ENCODE measurements at regions of chr18 and their contacts with region 1.

Region 1: GRCh38 chr18:11995445-11996189 is 14.3 kb downstream of the IMPA2 start:
- DNase-seq: peak; percentile 54
- H3K4me3 ChIP-seq: no peak overlapping the region
- H3K27ac ChIP-seq: no peak overlapping the region
- H3K4me1 ChIP-seq: peaks cover 14% of the 10 kb centered on the region
- H3K27me3 ChIP-seq: no peaks in the 10 kb centered on the region
- CTCF ChIP-seq: peak; percentile 66 to 79

Region 2: GRCh38 chr18:11937874-11938478 is 57.6 kb before region 1 on chr18:
- CTCF ChIA-PET with region 1: interaction called, 40 read pairs
- dilution Hi-C with region 1: loop called (anchors 5 kb)
- in situ Hi-C with region 1: loop called in 1 of 2 experiments (anchors 5 kb)
- intact Hi-C with region 1: loop called (anchors 1 kb)
- DNase-seq: peak; percentile 47
- H3K4me3 ChIP-seq: no peak overlapping the region
- H3K27ac ChIP-seq: no peak overlapping the region
- H3K4me1 ChIP-seq: no peaks in the 10 kb centered on the region
- H3K27me3 ChIP-seq: no peaks in the 10 kb centered on the region
- CTCF ChIP-seq: peak; percentile 70 to 83

Region 3: GRCh38 chr18:11947214-11948191 is 48.1 kb before region 1 on chr18:
- CTCF ChIA-PET with region 1: interaction called, 4 read pairs
- dilution Hi-C with region 1: no loop called
- in situ Hi-C with region 1: no loop called
- intact Hi-C with region 1: loop called (anchors 2 kb)
- DNase-seq: peak; percentile 95
- H3K4me3 ChIP-seq: no peak overlapping the region
- H3K27ac ChIP-seq: peak overlapping the region; percentile 57
- H3K4me1 ChIP-seq: peaks cover 17% of the 10 kb centered on the region
- H3K27me3 ChIP-seq: no peaks in the 10 kb centered on the region
- CTCF ChIP-seq: no peak

Region 4: GRCh38 chr18:12038639-12039417 is 43.2 kb after region 1 on chr18:
- CTCF ChIA-PET with region 1: interaction called, 7 read pairs
- dilution Hi-C with region 1: no loop called
- in situ Hi-C with region 1: no loop called
- intact Hi-C with region 1: loop called (anchors 1 kb)
- DNase-seq: peak; percentile 61
- H3K4me3 ChIP-seq: peak overlapping the region; percentile 33 to 53 (median 41)
- H3K27ac ChIP-seq: peak overlapping the region; percentile 22
- H3K4me1 ChIP-seq: peaks cover 20% of the 10 kb centered on the region
- H3K27me3 ChIP-seq: no peaks in the 10 kb centered on the region
- CTCF ChIP-seq: peak; percentile 73 to 93

Region 5: DNA sequence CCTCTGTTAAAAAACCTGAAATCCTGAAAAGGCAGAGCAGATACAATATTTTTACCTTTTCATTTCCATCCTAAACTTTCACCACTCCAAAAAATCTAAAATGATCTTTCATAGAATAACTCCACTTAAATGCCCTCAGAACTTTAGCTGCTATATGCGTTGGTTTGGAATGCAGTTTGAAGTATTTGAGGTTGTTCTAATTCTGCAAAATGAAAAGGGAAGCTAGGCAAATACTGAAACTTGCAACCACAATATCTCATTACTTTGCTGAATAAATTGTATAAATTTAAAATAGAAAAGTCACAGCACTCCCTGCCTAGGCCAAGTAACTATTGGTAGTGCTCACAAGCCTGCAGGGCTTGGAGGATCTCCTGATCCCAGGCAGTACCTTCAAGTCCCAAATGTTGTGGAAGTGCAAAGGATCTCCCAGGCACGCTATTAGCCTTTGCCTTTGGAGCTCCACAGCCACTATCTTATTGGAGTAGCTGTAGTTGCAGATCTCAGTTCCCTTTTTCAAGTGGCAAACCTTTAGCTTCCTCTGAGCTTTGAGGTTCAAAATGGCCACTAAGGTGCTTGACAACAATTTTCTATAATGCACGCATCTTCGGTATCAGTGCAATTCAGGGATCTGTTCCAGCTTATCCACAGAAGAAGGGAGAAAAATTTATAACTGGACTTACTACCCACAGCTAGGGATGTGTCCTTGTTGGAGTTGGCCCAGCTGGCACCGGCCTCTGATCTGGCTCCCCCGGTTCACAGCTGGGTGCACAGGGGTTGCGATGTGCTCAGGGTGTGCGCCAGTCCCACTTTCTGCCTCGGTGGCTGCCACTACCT is 54.6 kb after region 1 on chr18:
- CTCF ChIA-PET with region 1: no interaction called
- dilution Hi-C with region 1: no loop called
- in situ Hi-C with region 1: loop called in 1 of 2 experiments (anchors 10 kb)
- intact Hi-C with region 1: no loop called
- DNase-seq: no peak
- H3K4me3 ChIP-seq: no peak overlapping the region
- H3K27ac ChIP-seq: no peak overlapping the region
- H3K4me1 ChIP-seq: peaks cover 14% of the 10 kb centered on the region
- H3K27me3 ChIP-seq: no peaks in the 10 kb centered on the region
- CTCF ChIP-seq: no peak

Region 6: GRCh38 chr18:12092398-12093229 is 97.0 kb after region 1 on chr18:
- CTCF ChIA-PET with region 1: no interaction called
- dilution Hi-C with region 1: no loop called
- in situ Hi-C with region 1: no loop called
- intact Hi-C with region 1: no loop called
- DNase-seq: no peak
- H3K4me3 ChIP-seq: no peak overlapping the region
- H3K27ac ChIP-seq: no peak overlapping the region
- H3K4me1 ChIP-seq: no peaks in the 10 kb centered on the region
- H3K27me3 ChIP-seq: no peaks in the 10 kb centered on the region
- CTCF ChIP-seq: peak in 1 of 2 donors; percentile 38

Measured in mammary epithelial cell (primary cell).